HEK293 (cell line): ENCODE measurements at regions of chr21 and their contacts with region 1.

Region 1: GRCh38 chr21:34888569-34889319 is 160.4 kb downstream of the RUNX1 start:
- H3K4me3 ChIP-seq: peak overlapping the region; percentile 94
- H3K27ac ChIP-seq: peak overlapping the region; percentile 95
- H3K4me1 ChIP-seq: peaks cover 8% of the 10 kb centered on the region; the same call in 1 of the 2 replicates
- CTCF ChIP-seq: 0 out of 2 replicates have a peak, but pooled peaks have one; percentile 31

Region 2: DNA sequence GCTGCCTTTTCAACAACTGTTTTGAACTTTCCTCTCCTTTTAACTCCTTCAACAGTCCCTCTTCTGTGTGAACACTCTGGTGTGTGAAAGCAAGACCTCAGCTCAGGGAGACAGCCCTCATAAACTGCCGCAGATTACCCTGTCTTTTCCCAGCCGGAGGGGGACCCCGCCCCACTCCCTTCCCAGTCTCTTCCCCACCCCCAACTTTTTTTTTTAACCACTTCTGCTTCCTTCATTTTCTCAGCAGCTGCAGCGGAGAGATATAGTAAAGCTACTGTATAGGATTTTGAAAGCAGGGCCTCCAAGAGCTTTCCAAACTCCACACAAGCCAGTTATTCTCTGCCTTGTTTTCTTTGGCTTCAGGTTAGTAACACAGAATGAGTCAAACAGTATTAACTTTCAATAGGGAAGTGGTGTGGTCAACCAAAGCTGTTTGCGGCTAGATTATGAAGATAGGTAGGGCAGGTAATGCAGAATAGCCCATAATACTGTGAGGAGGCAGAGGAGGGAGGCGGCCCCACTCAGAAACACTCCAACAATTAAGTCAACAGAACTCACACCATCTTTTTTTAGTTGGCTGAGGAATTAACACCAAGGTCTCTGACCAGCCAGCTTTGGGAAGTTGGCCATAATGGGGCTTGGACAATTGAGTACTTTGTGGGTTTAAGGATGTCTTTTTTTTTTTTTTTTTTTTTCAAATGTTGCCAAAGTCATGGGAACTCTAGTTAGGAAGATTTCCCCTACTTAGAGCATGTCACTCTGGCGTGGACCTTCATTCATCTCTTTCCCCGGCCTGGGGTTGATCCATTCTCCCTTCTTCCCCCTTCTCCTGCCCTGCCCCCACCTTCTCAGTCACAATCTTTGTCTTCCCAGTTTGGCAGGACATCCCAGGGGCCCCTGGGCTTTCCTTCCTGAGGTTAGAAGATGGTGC is 43.0 kb before region 1 on chr21:
- CTCF ChIA-PET with region 1: interaction called, 3 read pairs
- POLR2A ChIA-PET with region 1: interaction called, 56 read pairs
- H3K4me3 ChIP-seq: no peak overlapping the region
- H3K27ac ChIP-seq: peak overlapping the region; percentile 96
- H3K4me1 ChIP-seq: peaks cover 39% of the 10 kb centered on the region
- CTCF ChIP-seq: no peak

Region 3: GRCh38 chr21:35048183-35048601 is 159.4 kb after region 1 on chr21:
- CTCF ChIA-PET with region 1: interaction called, 4 read pairs
- POLR2A ChIA-PET with region 1: interaction called, 15 read pairs
- H3K4me3 ChIP-seq: no peak overlapping the region
- H3K27ac ChIP-seq: no peak overlapping the region; the same call in 1 of the 2 replicates
- H3K4me1 ChIP-seq: peaks cover 15% of the 10 kb centered on the region
- CTCF ChIP-seq: no peak

Region 4: GRCh38 chr21:35256467-35256988 is 367.8 kb after region 1 on chr21:
- CTCF ChIA-PET with region 1: interaction called, 4 read pairs
- POLR2A ChIA-PET with region 1: interaction called, 17 read pairs
- H3K4me3 ChIP-seq: peak overlapping the region; percentile 31
- H3K27ac ChIP-seq: peak overlapping the region; percentile 56
- H3K4me1 ChIP-seq: peaks cover 11% of the 10 kb centered on the region
- CTCF ChIP-seq: no peak

Region 5: GRCh38 chr21:35400233-35400957 is 511.7 kb after region 1 on chr21:
- CTCF ChIA-PET with region 1: interaction called, 12 read pairs
- POLR2A ChIA-PET with region 1: interaction called, 11 read pairs
- H3K4me3 ChIP-seq: no peak overlapping the region
- H3K27ac ChIP-seq: no peak overlapping the region
- H3K4me1 ChIP-seq: no peaks in the 10 kb centered on the region
- CTCF ChIP-seq: peak; percentile 24; the same call in 1 of the 2 replicates

Region 6: GRCh38 chr21:35779690-35780570 is 891.2 kb after region 1 on chr21:
- CTCF ChIA-PET with region 1: no interaction called
- POLR2A ChIA-PET with region 1: interaction called, 12 read pairs
- H3K4me3 ChIP-seq: no peak overlapping the region
- H3K27ac ChIP-seq: no peak overlapping the region
- H3K4me1 ChIP-seq: peaks cover 6% of the 10 kb centered on the region; the same call in 1 of the 2 replicates
- CTCF ChIP-seq: no peak

Region 7: DNA sequence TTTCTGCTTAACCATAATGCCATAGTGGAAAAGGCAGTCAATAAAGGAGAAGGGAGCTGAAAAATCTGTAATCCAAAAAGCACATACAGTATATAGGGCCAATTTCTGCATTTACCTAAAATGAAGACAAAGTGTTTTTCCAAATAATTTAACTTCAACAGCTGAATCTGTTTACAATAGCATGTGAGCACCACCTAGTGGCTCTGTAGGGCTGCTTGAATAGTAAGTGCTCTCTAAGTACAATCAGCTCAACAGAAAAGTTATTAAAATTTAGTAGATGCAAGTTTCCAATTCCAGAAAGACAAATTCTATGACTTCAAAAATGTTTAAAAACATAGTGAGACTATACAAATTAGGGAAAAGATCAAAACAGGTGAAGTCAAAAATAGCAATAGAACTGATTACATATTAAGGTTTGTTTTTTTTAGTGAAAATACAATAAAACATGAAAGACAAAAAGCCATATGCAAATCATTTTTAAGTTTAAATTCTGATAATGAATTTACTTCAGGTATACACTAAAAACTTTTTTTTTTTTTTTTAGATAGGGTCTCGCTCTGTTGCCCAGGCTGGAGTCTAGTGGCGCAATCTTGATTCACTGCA is 951.6 kb after region 1 on chr21:
- CTCF ChIA-PET with region 1: interaction called, 14 read pairs
- POLR2A ChIA-PET with region 1: interaction called, 8 read pairs
- H3K4me3 ChIP-seq: no peak overlapping the region
- H3K27ac ChIP-seq: no peak overlapping the region
- H3K4me1 ChIP-seq: no peaks in the 10 kb centered on the region
- CTCF ChIP-seq: peak; percentile 50